AG04449 (cell line): ENCODE measurements at regions of chrX and their contacts with region 1.

Region 1: DNA sequence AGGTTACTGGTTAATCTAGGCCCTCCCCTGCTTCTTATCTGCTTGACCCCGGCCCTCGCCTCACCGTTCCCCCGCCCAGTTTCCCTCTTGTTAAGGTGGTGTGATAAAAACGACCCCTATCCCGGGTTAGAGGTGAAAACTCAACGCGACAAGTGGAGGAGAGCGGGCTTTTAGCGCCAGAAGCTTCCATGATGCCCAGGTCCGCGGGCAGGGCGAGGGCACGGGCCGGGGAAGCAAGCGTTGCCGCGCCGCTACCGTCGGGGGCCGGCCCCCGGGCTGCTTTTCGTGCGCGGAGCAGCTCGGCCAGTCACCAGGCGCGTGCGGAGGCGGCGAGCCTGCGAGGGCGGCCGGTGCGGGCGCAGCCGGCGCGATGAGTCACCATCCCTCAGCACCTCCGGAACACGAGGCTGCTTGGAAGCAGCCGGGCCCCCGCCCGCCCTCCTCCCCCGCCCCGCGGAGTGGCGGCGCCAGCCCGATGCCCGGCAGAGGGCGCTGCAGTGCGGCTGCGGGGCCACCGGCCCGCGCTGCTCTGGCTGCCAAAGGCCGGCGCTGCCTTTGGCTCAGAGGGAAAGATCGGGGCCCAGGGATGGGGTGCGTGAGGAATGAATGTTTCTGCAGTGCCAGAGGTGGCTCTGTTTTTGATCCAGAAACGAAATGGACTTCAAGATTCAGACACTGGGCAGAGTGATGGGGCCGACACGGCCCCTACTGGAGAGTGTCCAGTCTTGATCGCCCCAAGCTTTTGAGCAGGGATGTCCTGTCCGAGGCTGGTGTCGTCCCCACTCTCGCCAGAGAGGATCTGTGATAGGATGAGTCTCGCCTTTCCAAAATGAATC is 107.8 kb downstream of the NHSL2 start:
- DNase-seq: no peak
- H3K4me3 ChIP-seq: peak overlapping the region; percentile 32
- CTCF ChIP-seq: peak; percentile 44

Region 2: DNA sequence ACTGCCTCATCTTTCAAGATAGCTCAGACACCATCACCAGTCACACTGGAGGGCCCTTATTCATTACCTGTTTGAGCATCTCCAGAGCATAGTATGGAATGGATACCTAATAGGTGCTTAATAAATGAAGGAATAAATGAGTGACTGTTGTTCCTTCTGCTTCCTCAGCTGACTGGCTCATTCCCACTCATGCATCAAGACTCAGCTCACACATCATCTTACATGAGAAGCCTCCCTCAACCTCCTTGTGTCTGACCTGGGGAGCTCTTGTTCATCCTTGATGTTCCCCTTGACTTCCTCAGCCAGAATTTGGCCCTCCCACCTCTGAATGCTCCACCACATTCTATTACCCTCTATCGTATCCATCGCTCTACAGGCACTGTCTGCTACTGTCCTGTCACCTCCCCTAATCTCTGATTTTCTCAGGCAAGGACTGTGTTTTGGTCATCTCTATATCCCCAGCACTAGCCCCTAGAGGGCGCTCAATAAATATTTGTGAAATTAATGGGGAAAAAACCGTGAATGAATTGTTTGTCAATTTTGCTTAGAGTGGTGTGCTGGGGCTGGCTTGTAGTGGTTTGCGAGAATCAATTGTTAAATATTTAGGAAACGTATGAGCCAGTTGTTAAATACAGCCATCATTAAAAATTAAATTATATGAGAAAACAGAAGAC is 19.5 kb before region 1 on chrX:
- CTCF ChIA-PET with region 1: interaction called, 30 read pairs
- POLR2A ChIA-PET with region 1: interaction called, 3 read pairs
- DNase-seq: no peak
- H3K4me3 ChIP-seq: no peak overlapping the region
- CTCF ChIP-seq: no peak

Region 3: GRCh38 chrX:72003811-72004750 is 14.4 kb before region 1 on chrX:
- CTCF ChIA-PET with region 1: interaction called, 30 read pairs
- POLR2A ChIA-PET with region 1: interaction called, 3 read pairs
- DNase-seq: no peak
- H3K4me3 ChIP-seq: no peak overlapping the region
- CTCF ChIP-seq: peak; percentile 28

Region 4: GRCh38 chrX:72029483-72030411 is 11.3 kb after region 1 on chrX:
- CTCF ChIA-PET with region 1: interaction called, 75 read pairs
- POLR2A ChIA-PET with region 1: interaction called, 3 read pairs
- DNase-seq: peak; percentile 56
- H3K4me3 ChIP-seq: peak overlapping the region; percentile 61
- CTCF ChIP-seq: no peak

Region 5: GRCh38 chrX:72126539-72127140 is 108.1 kb after region 1 on chrX:
- CTCF ChIA-PET with region 1: interaction called, 155 read pairs
- POLR2A ChIA-PET with region 1: no interaction called
- DNase-seq: peak; percentile 40
- H3K4me3 ChIP-seq: no peak overlapping the region
- CTCF ChIP-seq: peak; percentile 77